CD4-positive, alpha-beta memory T cell (primary cell): ENCODE measurements at regions of chr2 and their contacts with region 1.

Region 1: DNA sequence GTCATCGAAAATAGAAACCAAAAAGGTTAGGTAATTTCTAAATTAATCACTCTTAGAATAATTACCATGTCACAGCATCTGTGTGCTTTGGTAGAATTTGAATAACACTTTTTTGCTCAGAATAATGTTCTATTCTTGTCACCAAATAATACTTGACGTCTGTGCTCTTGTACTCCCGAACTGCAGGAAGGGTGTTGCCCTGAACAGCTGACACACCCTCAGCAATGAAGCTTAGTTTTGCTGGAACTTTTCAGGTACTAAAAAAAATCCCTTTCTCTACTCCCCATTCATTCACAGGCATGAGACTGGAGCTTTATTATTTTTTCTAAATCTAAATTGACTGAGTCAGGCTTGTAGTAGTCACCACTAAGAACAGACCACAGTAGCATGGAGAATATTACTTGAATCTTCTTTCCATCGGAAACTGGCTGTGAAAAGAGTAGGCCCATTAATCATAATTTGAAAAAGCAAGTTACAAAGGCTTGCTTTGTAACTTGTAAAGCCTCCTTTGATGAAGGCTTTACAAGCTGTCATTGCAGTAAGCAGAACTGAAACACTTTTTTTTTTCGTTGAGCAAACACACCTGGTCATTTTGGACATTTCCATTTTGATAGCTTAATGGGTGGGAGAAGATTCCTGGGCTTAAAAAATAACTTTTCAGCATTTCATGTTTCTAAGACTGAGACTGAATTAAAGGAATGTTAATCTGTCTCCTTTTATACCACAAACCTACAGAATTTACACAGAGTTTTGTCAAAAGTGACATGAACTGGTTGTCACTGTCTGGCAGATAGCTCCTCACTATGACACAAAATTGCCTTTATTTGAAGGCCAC is 70.3 kb upstream of the PELI1 start:
- DNase-seq: peak; percentile 63 to 76 (median 73)
- H3K4me3 ChIP-seq: peak overlapping the region in 1 of 2 donors; percentile 28
- H3K4me3 Mint-ChIP-seq: peak overlapping the region; percentile 58 to 89 (median 76)
- H3K27ac ChIP-seq: peak overlapping the region; percentile 51
- H3K27ac Mint-ChIP-seq: peak overlapping the region; percentile 87 to 94 (median 92)
- H3K4me1 ChIP-seq: peaks cover 43% of the 10 kb centered on the region
- H3K4me1 Mint-ChIP-seq: peaks cover 29 to 46% (median 42%) of the 10 kb centered on the region in 4 donors
- H3K27me3 ChIP-seq: no peaks in the 10 kb centered on the region
- H3K27me3 Mint-ChIP-seq: no peaks in the 10 kb centered on the region

Region 2: GRCh38 chr2:64203858-64204632 is 10.5 kb before region 1 on chr2:
- CTCF ChIA-PET with region 1: interaction called, 3 read pairs
- POLR2A ChIA-PET with region 1: interaction called, 36 read pairs
- intact Hi-C with region 1: loop called (anchors 1 kb)
- DNase-seq: peak in 4 of 5 donors; percentile 43 to 82 (median 54)
- H3K4me3 ChIP-seq: peak overlapping the region; percentile 5 to 35
- H3K4me3 Mint-ChIP-seq: peak overlapping the region; percentile 62 to 93 (median 80)
- H3K27ac ChIP-seq: peak overlapping the region; percentile 87
- H3K27ac Mint-ChIP-seq: peak overlapping the region; percentile 91 to 99 (median 96)
- H3K4me1 ChIP-seq: peaks cover 81% of the 10 kb centered on the region
- H3K4me1 Mint-ChIP-seq: peaks cover 54 to 85% (median 75%) of the 10 kb centered on the region in 4 donors
- H3K27me3 ChIP-seq: no peaks in the 10 kb centered on the region
- H3K27me3 Mint-ChIP-seq: no peaks in the 10 kb centered on the region

Region 3: GRCh38 chr2:64228126-64228678 is 13.7 kb after region 1 on chr2:
- CTCF ChIA-PET with region 1: interaction called, 9 read pairs
- POLR2A ChIA-PET with region 1: interaction called, 8 read pairs
- intact Hi-C with region 1: loop called (anchors 2 kb)
- DNase-seq: peak; percentile 39 to 53 (median 46)
- H3K4me3 ChIP-seq: peak overlapping the region; percentile 30 to 50
- H3K4me3 Mint-ChIP-seq: peak overlapping the region; percentile 90 to 95 (median 93)
- H3K27ac ChIP-seq: peak overlapping the region; percentile 20
- H3K27ac Mint-ChIP-seq: peak overlapping the region; percentile 74 to 96 (median 93)
- H3K4me1 ChIP-seq: peaks cover 17% of the 10 kb centered on the region
- H3K4me1 Mint-ChIP-seq: peaks cover 9 to 27% (median 16%) of the 10 kb centered on the region in 4 donors
- H3K27me3 ChIP-seq: no peaks in the 10 kb centered on the region
- H3K27me3 Mint-ChIP-seq: peaks cover 0 to 4% of the 10 kb centered on the region in 2 donors

Region 4: GRCh38 chr2:64463781-64464180 is 249.3 kb after region 1 on chr2:
- CTCF ChIA-PET with region 1: no interaction called
- POLR2A ChIA-PET with region 1: no interaction called
- intact Hi-C with region 1: no loop called
- DNase-seq: no peak
- H3K4me3 ChIP-seq: no peak overlapping the region
- H3K4me3 Mint-ChIP-seq: no peak overlapping the region
- H3K27ac ChIP-seq: no peak overlapping the region
- H3K27ac Mint-ChIP-seq: no peak overlapping the region
- H3K4me1 ChIP-seq: no peaks in the 10 kb centered on the region
- H3K4me1 Mint-ChIP-seq: no peaks in the 10 kb centered on the region
- H3K27me3 ChIP-seq: no peaks in the 10 kb centered on the region
- H3K27me3 Mint-ChIP-seq: peaks cover 0 to 1% of the 10 kb centered on the region in 2 donors